CD4-positive, alpha-beta memory T cell (primary cell): ENCODE measurements at regions of chr16 and their contacts with region 1.

Region 1: DNA sequence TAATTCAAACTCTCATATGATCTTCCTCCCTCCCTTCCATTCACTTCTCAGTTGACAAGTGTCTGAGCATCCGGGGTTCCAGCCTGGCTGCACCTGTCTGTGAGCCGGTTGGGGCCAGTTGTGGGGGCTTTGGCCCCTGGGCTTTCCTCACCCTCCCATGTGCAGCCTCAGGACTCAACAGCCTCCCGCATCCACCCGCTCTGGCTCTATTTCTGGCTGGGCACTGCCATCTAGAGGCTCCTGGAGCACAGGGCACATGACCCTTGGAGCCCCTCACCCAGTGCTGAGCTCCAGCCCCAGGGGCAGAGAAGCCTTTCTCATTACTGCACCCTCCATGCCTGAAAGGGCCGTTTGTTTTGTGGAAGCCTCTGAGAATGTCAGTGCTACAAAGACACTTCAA is 43.3 kb downstream of the HAPSTR1 start:
- DNase-seq: peak in 4 of 5 donors; percentile 38 to 46 (median 46)
- H3K4me3 ChIP-seq: no peak overlapping the region
- H3K4me3 Mint-ChIP-seq: peak overlapping the region in 1 of 8 donors; percentile 62
- H3K27ac ChIP-seq: no peak overlapping the region
- H3K27ac Mint-ChIP-seq: peak overlapping the region in 4 of 7 donors; percentile 39 to 82 (median 55)
- H3K4me1 ChIP-seq: peaks cover 18% of the 10 kb centered on the region
- H3K4me1 Mint-ChIP-seq: peaks cover 9 to 26% (median 19%) of the 10 kb centered on the region in 4 donors
- H3K27me3 ChIP-seq: no peaks in the 10 kb centered on the region
- H3K27me3 Mint-ChIP-seq: peaks cover 0 to 2% of the 10 kb centered on the region in 2 donors

Region 2: DNA sequence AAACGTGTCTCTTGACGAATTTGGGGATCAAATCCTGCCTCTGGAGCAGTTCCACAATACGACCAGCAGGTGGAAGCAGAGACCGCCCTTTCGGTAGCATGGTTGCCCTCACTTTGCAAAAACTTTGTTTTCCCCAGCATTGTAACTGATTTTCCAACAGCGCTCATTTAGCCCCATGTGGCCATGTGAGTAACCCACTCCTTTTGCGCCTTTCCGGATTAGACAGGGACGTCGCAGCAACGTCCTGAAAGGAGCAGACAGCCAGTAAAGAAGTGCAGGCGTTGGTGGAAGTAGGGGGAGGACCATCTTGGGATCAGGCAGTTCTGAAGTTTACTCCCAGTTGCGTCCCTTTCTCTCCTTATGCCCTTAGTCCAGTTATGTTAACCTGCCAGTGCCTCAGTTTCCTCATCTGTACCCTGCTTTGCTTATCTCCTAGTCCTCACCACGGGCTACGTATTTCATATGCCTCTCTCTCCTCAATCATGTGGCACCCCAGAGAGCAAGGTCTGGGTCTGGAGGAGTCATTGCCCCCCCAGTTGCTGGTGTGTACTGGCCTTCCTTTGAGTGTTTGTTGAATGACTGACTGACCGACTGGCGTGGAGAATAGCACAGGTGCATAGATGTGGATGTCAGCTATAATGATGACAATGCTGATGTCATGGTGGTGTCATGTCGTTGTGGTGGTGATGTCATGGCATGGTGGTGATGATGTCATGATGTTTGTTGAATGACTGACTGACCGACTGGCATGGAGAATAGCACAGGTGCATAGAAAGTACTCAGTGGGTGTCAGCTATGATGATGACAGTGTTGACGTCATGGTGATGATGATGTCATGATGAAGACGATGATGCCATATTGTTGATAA is 566.8 kb before region 1 on chr16:
- CTCF ChIA-PET with region 1: interaction called, 5 read pairs
- POLR2A ChIA-PET with region 1: no interaction called
- intact Hi-C with region 1: loop called (anchors 1 kb)
- DNase-seq: peak; percentile 71 to 82 (median 80)
- H3K4me3 ChIP-seq: no peak overlapping the region
- H3K4me3 Mint-ChIP-seq: peak overlapping the region in 4 of 8 donors; percentile 14 to 41 (median 28)
- H3K27ac ChIP-seq: no peak overlapping the region
- H3K27ac Mint-ChIP-seq: peak overlapping the region in 5 of 7 donors; percentile 48 to 83 (median 62)
- H3K4me1 ChIP-seq: no peaks in the 10 kb centered on the region
- H3K4me1 Mint-ChIP-seq: peaks cover 4 to 10% (median 7%) of the 10 kb centered on the region in 4 donors
- H3K27me3 ChIP-seq: no peaks in the 10 kb centered on the region
- H3K27me3 Mint-ChIP-seq: peaks cover 0 to 16% of the 10 kb centered on the region in 2 donors

Region 3: GRCh38 chr16:9123871-9124270 is 10.9 kb before region 1 on chr16:
- CTCF ChIA-PET with region 1: interaction called, 32 read pairs
- POLR2A ChIA-PET with region 1: interaction called, 3 read pairs
- intact Hi-C with region 1: no loop called
- DNase-seq: no peak
- H3K4me3 ChIP-seq: no peak overlapping the region
- H3K4me3 Mint-ChIP-seq: peak overlapping the region in 1 of 8 donors; percentile 15
- H3K27ac ChIP-seq: no peak overlapping the region
- H3K27ac Mint-ChIP-seq: peak overlapping the region in 3 of 7 donors; percentile 17 to 47 (median 30)
- H3K4me1 ChIP-seq: peaks cover 40% of the 10 kb centered on the region
- H3K4me1 Mint-ChIP-seq: peaks cover 36 to 84% (median 52%) of the 10 kb centered on the region in 4 donors
- H3K27me3 ChIP-seq: no peaks in the 10 kb centered on the region
- H3K27me3 Mint-ChIP-seq: no peaks in the 10 kb centered on the region

Region 4: GRCh38 chr16:9148374-9149015 is 13.8 kb after region 1 on chr16:
- CTCF ChIA-PET with region 1: interaction called, 20 read pairs
- POLR2A ChIA-PET with region 1: no interaction called
- intact Hi-C with region 1: no loop called
- DNase-seq: no peak
- H3K4me3 ChIP-seq: no peak overlapping the region
- H3K4me3 Mint-ChIP-seq: no peak overlapping the region
- H3K27ac ChIP-seq: no peak overlapping the region
- H3K27ac Mint-ChIP-seq: no peak overlapping the region
- H3K4me1 ChIP-seq: no peaks in the 10 kb centered on the region
- H3K4me1 Mint-ChIP-seq: peaks cover 0 to 2% (median 0%) of the 10 kb centered on the region in 4 donors
- H3K27me3 ChIP-seq: no peaks in the 10 kb centered on the region
- H3K27me3 Mint-ChIP-seq: peaks cover 3 to 7% of the 10 kb centered on the region in 2 donors